A549 (cell line): ENCODE measurements at regions of chr2 and their contacts with region 1.

Region 1: DNA sequence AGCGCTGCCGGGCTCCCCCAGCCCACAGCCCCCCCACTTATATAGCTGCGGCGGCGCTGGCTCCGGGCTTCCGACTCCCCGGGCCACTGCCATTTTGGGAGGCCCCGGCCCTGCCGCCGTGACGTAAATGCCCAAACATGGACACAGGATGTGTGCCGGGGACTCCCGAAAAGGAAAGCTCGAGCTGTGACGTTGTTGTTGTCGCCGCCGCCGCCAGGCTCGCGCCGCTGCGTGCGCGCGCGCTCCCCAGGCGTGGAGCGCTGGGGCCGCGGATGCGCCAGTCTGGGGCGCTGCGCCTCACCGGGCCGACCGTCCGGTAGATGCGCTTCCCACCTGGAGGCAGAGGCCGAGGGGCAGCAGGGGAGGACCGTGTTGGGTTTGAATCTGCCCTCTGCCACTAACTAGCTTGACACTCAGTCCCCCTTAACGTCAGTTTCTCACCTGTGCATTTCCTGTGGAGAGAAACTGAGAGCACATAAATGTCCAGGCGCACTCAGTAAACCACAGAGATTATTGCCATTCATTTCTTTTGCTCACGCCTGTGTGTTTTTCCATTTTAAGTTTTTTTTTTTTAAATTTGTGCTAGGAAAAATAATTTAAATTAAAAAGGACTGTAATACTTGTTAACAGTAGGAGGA is at the start of gene EGR4:
- DNase-seq: peak; percentile 89 to 93
- ATAC-seq: peak; percentile 49 to 76
- H3K4me3 ChIP-seq: peak within 1 kb of the TSS; percentile 58
- H3K27ac ChIP-seq: peak within 1 kb of the TSS in 1 of 2 experiments; percentile 14; a peak in 1 of 6 replicates
- H3K4me1 ChIP-seq: peaks cover 18% of the 10 kb centered on the region; the same call in 2 of the 3 replicates
- CTCF ChIP-seq: no peak
- EP300 ChIP-seq: no peak
- POLR2A ChIP-seq: no peak
- RAD21 ChIP-seq: no peak
- polyA plus RNA-seq, gene EGR4: 0.03 TPM in 1 of 2 replicates, not detected in the other

Region 2: GRCh38 chr2:72953976-72954375 is 339.7 kb before region 1 on chr2:
- CTCF ChIA-PET with region 1: no interaction called
- POLR2A ChIA-PET with region 1: no interaction called
- DNase-seq: no peak
- ATAC-seq: no peak
- H3K4me3 ChIP-seq: no peak overlapping the region
- H3K27ac ChIP-seq: no peak overlapping the region
- H3K4me1 ChIP-seq: no peaks in the 10 kb centered on the region
- CTCF ChIP-seq: no peak
- EP300 ChIP-seq: no peak
- POLR2A ChIP-seq: no peak
- RAD21 ChIP-seq: no peak

Region 3: DNA sequence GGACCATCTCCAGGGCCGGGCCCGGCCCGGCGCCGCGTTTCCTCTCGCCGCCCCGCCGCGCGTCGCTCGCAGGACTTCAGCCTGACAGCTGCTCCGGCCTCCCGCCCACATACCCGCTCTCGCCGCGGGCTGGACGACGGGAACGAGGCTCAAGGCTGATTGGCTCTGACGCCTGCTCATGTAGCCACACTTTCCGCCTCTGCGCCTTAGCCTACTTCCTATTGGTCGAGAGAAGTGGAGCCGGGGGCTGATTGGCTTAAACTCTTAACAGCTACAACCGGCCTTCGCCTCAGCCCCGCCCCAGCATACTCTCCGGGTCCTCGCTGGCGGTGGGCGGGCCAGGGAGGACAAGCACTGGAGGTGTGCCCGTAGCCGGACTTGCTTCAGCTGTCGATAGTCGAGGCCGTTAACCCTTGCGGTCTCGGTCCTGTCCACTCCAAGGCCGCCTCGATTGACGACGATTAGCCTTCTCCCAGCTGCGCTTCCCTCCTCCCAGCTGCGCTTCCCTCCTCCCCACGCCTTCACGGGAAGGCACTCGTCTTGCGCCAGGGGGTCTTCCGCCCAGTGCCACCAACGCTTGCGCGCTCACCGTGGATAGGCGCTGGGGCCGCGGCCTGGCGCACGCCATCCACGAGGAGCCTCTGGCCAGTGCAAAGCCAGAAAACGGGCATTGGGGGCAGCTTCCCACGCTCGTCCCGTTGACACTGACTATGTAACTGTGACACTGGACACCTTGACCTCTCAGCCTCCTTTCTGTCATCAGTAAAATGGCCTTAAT is 60.3 kb before region 1 on chr2 and contains the start of gene PRADC1:
- CTCF ChIA-PET with region 1: interaction called, 33 read pairs
- POLR2A ChIA-PET with region 1: interaction called, 5 read pairs
- DNase-seq: peak; percentile 99 to 100
- ATAC-seq: peak; percentile 84 to 95
- H3K4me3 ChIP-seq: peak within 1 kb of the TSS; percentile 64
- H3K27ac ChIP-seq: peak within 1 kb of the TSS; percentile 85 to 92
- H3K4me1 ChIP-seq: peaks cover 24% of the 10 kb centered on the region
- CTCF ChIP-seq: no peak
- EP300 ChIP-seq: no peak
- POLR2A ChIP-seq: peak; percentile 75
- RAD21 ChIP-seq: no peak
- polyA plus RNA-seq, gene PRADC1: 9.5 and 11.2 TPM in 2 replicates

Region 4: GRCh38 chr2:73260034-73260984 is 33.3 kb before region 1 on chr2:
- CTCF ChIA-PET with region 1: interaction called, 24 read pairs
- POLR2A ChIA-PET with region 1: no interaction called
- DNase-seq: peak; percentile 76 to 84
- ATAC-seq: peak; percentile 69 to 84
- H3K4me3 ChIP-seq: no peak overlapping the region
- H3K27ac ChIP-seq: no peak overlapping the region
- H3K4me1 ChIP-seq: no peaks in the 10 kb centered on the region
- CTCF ChIP-seq: peak; percentile 61
- EP300 ChIP-seq: no peak
- POLR2A ChIP-seq: no peak
- RAD21 ChIP-seq: peak; percentile 61 to 68

Region 5: DNA sequence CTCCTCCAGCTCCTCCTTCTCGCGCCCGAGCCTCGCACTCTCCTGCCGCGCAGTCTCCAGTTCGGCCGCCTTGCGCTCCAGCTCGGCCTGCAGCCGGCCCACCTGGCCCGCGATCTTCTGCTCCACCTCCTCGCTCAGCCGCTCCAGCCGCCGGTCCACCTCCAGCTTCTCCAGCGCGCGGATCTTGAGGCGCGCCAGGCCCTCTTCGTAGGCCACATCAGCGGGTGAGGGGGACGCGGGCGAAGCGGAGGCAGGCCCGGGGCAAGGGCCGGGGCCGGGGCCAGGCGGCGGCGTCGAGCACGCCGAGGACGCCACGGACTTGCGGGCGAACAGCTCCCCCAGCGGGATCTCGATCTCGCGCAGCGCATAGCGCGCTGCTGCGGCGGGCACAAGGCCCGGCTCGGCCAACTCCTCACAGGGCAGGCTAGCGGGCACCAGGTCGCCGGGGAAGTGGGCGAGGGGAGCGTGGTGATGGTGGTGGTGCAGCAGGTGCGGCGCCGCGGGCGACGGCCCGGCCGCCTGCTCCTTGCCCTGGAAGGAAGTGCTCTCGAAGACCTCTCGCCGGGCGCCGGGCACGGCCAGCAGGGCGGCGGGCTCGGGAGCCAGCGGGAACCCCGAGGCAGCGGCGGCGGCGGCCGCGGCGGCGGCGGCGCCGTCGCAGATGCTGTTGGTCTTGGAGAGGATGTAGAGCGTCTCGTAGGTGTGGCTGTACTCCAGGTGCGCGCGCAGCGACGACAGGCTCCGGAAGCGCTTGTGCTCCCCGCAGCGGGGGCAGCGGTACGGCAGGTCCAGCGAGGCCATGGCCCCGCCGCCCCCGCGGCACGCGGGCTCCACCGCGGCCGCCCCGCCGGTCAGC is 24.6 kb before region 1 on chr2:
- CTCF ChIA-PET with region 1: interaction called, 42 read pairs
- POLR2A ChIA-PET with region 1: no interaction called
- DNase-seq: peak; percentile 82 to 83
- ATAC-seq: peak; percentile 79 to 80
- H3K4me3 ChIP-seq: peak overlapping the region; percentile 43
- H3K27ac ChIP-seq: peak overlapping the region; percentile 66 to 82
- H3K4me1 ChIP-seq: peaks cover 7% of the 10 kb centered on the region; the same call in 1 of the 3 replicates
- CTCF ChIP-seq: peak; percentile 36; the same call in 2 of the 3 replicates
- EP300 ChIP-seq: no peak
- POLR2A ChIP-seq: no peak; the same call in none of the 2 replicates
- RAD21 ChIP-seq: no peak

Region 6: GRCh38 chr2:73307720-73308119 is 14.1 kb after region 1 on chr2:
- CTCF ChIA-PET with region 1: interaction called, 10 read pairs
- POLR2A ChIA-PET with region 1: no interaction called
- DNase-seq: no peak
- ATAC-seq: peak in 1 of 2 experiments; percentile 51; a peak in 3 of 6 replicates
- H3K4me3 ChIP-seq: no peak overlapping the region
- H3K27ac ChIP-seq: no peak overlapping the region
- H3K4me1 ChIP-seq: no peaks in the 10 kb centered on the region
- CTCF ChIP-seq: no peak
- EP300 ChIP-seq: no peak
- POLR2A ChIP-seq: no peak
- RAD21 ChIP-seq: no peak

Region 7: GRCh38 chr2:73324126-73324725 is 30.6 kb after region 1 on chr2:
- CTCF ChIA-PET with region 1: interaction called, 11 read pairs
- POLR2A ChIA-PET with region 1: no interaction called
- DNase-seq: no peak
- ATAC-seq: no peak
- H3K4me3 ChIP-seq: no peak overlapping the region
- H3K27ac ChIP-seq: no peak overlapping the region
- H3K4me1 ChIP-seq: no peaks in the 10 kb centered on the region
- CTCF ChIP-seq: no peak
- EP300 ChIP-seq: no peak
- POLR2A ChIP-seq: no peak
- RAD21 ChIP-seq: no peak

Region 8: DNA sequence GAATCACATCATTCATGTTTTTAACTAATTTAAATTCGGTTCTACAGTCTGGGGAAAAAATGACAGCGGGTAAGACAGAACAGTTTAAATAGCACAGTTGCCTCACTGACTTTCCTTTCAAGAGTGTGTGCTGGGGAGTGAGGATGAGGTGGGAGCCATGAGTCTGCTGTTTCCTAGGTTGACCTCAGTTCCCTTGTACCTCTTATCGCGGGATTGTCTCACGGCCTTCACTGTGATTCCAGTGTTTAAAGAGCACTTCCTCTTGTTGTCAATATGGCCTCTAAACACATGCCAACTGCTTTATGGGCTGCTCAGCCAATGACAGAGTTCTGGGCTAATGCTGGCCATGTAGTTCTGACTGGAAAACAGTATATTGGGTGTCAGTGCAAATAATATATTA is 50.3 kb after region 1 on chr2:
- CTCF ChIA-PET with region 1: interaction called, 10 read pairs
- POLR2A ChIA-PET with region 1: no interaction called
- DNase-seq: no peak
- ATAC-seq: no peak
- H3K4me3 ChIP-seq: no peak overlapping the region
- H3K27ac ChIP-seq: no peak overlapping the region
- H3K4me1 ChIP-seq: no peaks in the 10 kb centered on the region
- CTCF ChIP-seq: no peak
- EP300 ChIP-seq: no peak
- POLR2A ChIP-seq: no peak
- RAD21 ChIP-seq: no peak